ENCODE measurements at regions of chr10 and their contacts with region 1.

Region 1: DNA sequence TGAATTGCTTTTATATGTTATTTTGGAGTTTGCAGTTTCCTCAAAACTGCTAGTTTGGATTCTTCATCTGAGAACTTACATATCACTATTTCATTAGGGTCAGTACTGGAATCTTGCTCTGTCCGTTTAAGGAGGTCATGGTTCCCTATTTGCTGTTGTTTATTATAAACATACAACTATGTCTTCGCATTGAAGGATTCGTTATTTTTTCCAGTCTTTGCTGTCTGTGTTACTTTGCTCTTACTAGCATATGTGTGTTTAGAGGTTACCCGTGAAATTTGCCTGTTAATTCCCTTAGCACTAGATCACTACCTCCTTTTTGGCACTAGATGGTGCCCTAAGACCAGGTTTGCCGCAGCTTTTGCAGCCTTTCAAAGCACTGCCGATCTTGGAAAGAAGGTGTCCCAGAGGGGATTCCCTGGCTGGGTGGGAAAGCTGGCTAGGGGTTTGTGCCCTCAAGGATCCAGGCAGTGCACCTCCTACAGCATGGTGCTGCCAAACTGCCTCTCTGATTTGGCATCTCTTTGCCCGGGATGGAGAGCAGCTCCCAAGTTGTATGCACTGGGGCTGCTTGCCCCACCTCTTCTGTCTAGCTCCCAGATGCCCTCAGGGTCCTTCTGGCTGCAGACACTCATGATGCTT is 103.1 kb upstream of the APBB1IP start:
- H3K4me3 ChIP-seq: peak overlapping the region; percentile 22
- H3K27ac ChIP-seq: no peak overlapping the region
- H3K4me1 ChIP-seq: no peaks in the 10 kb centered on the region
- CTCF ChIP-seq: peak; percentile 84

Region 2: DNA sequence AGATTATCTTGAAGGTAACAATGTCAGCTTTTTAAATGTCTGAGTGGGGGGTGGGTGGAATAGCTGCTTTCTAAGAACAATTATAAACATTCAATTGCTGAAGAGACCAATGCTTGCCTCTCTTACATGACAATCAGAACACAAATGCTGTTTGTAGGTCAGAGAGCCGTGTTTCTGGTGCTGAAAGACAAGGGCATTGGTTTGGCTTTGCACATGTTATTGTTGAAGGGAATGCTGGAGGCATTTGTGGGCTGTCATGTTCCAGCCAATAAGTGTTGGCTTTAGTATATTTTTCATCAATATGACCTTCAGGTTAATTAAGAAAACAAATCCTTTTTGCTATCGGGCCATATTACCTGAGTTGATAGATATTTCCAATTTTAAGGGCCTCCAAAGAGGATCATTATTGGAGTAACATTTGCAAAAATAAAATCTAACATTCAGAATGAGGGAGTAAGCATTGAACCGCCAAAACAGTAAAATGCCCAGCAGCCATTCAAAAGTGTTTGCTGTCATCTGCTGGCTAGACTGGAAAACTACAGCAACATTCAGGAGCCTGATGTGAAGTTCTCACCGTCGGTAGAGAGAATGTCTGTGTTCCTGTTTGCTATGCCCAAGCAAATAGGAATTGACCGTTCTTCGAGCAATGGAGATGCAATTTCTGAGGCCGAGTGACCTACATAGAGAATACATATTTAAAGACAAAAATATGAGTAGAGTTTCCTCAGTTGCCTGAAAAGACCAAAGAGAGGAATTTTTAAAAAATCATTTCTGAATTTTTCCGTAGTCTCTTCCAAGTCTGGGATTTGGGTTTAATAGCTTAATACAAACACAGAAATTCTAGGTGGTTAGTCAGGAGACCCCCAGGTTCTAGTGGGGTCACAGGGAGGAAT is 221.9 kb after region 1 on chr10:
- CTCF ChIA-PET with region 1: interaction called, 133 read pairs
- POLR2A ChIA-PET with region 1: no interaction called
- H3K4me3 ChIP-seq: no peak overlapping the region
- H3K27ac ChIP-seq: no peak overlapping the region
- H3K4me1 ChIP-seq: no peaks in the 10 kb centered on the region
- CTCF ChIP-seq: peak; percentile 81

Region 3: GRCh38 chr10:26725837-26726727 is 391.0 kb after region 1 on chr10:
- CTCF ChIA-PET with region 1: interaction called, 13 read pairs
- POLR2A ChIA-PET with region 1: no interaction called
- H3K4me3 ChIP-seq: no peak overlapping the region
- H3K27ac ChIP-seq: no peak overlapping the region
- H3K4me1 ChIP-seq: no peaks in the 10 kb centered on the region
- CTCF ChIP-seq: no peak